Activated T-helper 2 cell treated with anti-CD3 and anti-CD28 coated beads, Interferon-gamma antibody, Interleukin-2, Interleukin-4, amounts not matched to agents 10 μg/mL and 5 μg/mL and 100 μg/mL, durations not matched to agents 14 hours and 24 hours and 36 hours (primary cell): ENCODE measurements at regions of chr13 and their contacts with region 1.

Region 1: GRCh38 chr13:40026174-40026585 is 370.7 kb downstream of the COG6 start:
- DNase-seq: peak; percentile 64
- H3K4me3 Mint-ChIP-seq: no peak overlapping the region
- H3K27ac Mint-ChIP-seq: peak overlapping the region; percentile 55
- H3K4me1 Mint-ChIP-seq: peaks cover 42% of the 10 kb centered on the region
- H3K27me3 Mint-ChIP-seq: no peaks in the 10 kb centered on the region

Region 2: DNA sequence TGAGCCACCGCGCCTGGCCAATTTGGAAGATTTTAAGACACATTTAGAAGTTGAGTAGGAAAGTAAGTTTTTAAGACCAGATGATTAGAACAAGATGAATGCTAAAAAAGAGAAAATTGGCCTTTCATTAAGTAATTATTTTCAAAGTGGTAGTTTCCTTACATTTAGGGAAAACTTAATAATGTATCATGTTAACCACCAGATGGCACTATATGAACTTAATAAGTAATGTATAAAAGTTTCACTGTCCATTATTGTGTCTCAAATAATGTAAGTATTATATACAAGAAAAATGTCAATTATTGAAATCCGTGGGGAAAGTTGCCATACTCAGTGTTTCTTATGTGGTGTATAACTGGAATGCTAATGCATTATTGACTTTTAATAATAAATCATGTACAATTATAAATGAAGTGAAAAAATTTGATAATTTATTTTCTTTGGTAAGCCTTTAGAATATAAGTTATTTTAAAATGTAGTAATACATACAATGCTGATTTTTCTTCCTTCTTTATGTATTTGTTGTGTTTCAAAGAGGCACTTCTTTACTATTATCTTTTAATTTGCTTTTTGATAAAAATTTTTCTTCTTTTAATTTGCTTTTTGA is 341.5 kb before region 1 on chr13:
- intact Hi-C with region 1: loop called (anchors 2 kb)
- DNase-seq: no peak
- H3K4me3 Mint-ChIP-seq: no peak overlapping the region
- H3K27ac Mint-ChIP-seq: no peak overlapping the region
- H3K4me1 Mint-ChIP-seq: peaks cover 27% of the 10 kb centered on the region
- H3K27me3 Mint-ChIP-seq: no peaks in the 10 kb centered on the region

Region 3: DNA sequence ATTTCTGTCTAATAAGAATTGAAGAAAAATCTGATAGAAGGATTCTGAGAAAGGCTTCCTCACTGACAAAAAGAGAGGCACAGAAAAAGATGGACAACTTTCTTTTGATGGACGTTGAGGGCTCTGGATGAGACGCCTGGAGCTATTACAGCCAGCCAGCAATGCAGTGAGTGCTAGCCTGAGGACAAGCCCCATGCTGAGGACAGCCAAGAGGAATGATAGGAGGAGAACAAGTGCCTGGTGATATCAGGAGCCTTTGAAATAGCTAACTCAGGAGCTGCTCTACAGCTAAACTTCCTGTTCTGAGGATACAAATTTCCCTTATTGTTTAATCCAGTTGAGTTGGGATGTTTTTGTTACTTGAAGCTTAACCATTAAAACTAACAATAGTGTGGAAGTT is 158.4 kb before region 1 on chr13:
- intact Hi-C with region 1: loop called (anchors 2 kb)
- DNase-seq: no peak
- H3K4me3 Mint-ChIP-seq: no peak overlapping the region
- H3K27ac Mint-ChIP-seq: no peak overlapping the region
- H3K4me1 Mint-ChIP-seq: peaks cover 9% of the 10 kb centered on the region
- H3K27me3 Mint-ChIP-seq: no peaks in the 10 kb centered on the region

Region 4: DNA sequence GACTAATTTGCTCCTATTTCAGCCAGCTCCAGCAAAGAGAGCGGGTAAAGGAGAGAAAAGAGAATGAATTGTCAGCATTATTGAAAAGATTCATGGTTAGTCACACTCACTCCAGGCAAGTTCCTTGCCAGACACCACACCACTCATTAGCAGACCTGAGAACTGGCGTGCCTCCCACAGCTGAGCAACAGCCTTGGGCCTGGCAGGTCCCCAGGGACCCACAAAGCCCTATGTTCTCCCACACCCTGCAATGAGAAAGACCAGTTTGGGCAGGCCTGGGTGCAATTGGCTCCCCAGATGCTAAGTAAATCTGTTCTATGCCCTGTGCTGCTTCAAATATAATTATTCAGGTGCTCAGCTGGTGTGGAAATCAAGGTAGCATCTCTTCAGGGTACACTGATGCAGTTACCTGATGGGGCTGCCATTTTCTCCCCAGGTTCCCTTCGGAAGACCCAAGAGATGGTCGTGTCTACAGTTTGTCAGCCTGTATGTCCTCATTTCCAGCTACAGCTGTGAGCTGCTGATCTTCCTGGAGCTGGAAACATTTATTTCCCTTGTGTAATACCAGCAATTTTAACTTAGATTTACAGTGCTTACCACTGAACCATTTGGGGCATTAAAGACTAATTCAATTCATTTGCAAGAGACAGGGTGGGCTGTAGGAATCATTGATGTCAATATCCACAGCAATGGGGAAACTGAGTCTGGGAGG is 34.3 kb after region 1 on chr13:
- intact Hi-C with region 1: loop called (anchors 2 kb)
- DNase-seq: no peak
- H3K4me3 Mint-ChIP-seq: no peak overlapping the region
- H3K27ac Mint-ChIP-seq: peak overlapping the region; percentile 56
- H3K4me1 Mint-ChIP-seq: peaks cover 38% of the 10 kb centered on the region
- H3K27me3 Mint-ChIP-seq: no peaks in the 10 kb centered on the region

Region 5: DNA sequence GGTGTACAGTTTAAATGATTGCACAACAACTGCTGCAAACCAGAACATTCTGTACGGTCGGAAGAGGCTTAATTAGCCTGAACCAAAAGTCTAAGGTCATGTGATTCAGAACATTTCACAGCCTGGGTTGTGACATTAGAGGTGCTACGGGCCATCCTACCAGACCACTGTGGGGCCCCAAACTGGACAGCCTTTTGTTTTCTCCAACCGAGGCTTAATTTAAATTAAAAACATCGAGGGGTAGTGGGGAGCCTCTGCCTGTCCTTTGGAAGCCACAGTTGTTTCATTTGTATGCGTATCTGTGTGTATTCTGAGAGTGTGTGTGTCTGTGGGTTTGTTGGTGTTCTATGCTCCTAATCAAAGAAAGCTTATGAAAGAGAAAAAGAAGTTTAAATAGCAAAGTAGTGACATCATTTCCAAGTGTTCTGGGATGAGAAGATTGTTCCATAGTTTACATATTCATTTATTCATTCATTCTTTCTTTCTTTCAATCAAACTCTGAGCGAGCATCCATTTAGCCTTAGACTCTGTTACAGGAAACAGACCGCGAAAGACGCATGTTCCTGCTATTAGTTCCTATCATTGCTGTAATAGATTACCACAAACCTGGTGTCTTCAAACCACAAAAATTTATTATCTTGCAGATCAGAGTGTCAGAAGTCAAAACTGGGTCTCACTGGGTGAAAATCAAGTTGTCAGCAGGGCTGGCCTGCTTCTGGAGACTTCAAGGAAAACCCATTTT is 195.5 kb after region 1 on chr13:
- intact Hi-C with region 1: loop called (anchors 1 kb)
- DNase-seq: peak; percentile 17
- H3K4me3 Mint-ChIP-seq: peak overlapping the region; percentile 1
- H3K27ac Mint-ChIP-seq: peak overlapping the region; percentile 83
- H3K4me1 Mint-ChIP-seq: peaks cover 38% of the 10 kb centered on the region
- H3K27me3 Mint-ChIP-seq: peaks cover 2% of the 10 kb centered on the region

Region 6: GRCh38 chr13:40682449-40683240 is 656.5 kb after region 1 on chr13:
- intact Hi-C with region 1: loop called (anchors 5 kb)
- DNase-seq: no peak
- H3K4me3 Mint-ChIP-seq: no peak overlapping the region
- H3K27ac Mint-ChIP-seq: no peak overlapping the region
- H3K4me1 Mint-ChIP-seq: peaks cover 10% of the 10 kb centered on the region
- H3K27me3 Mint-ChIP-seq: no peaks in the 10 kb centered on the region